ENCODE measurements at regions of chr6 and their contacts with region 1.

Region 1: DNA sequence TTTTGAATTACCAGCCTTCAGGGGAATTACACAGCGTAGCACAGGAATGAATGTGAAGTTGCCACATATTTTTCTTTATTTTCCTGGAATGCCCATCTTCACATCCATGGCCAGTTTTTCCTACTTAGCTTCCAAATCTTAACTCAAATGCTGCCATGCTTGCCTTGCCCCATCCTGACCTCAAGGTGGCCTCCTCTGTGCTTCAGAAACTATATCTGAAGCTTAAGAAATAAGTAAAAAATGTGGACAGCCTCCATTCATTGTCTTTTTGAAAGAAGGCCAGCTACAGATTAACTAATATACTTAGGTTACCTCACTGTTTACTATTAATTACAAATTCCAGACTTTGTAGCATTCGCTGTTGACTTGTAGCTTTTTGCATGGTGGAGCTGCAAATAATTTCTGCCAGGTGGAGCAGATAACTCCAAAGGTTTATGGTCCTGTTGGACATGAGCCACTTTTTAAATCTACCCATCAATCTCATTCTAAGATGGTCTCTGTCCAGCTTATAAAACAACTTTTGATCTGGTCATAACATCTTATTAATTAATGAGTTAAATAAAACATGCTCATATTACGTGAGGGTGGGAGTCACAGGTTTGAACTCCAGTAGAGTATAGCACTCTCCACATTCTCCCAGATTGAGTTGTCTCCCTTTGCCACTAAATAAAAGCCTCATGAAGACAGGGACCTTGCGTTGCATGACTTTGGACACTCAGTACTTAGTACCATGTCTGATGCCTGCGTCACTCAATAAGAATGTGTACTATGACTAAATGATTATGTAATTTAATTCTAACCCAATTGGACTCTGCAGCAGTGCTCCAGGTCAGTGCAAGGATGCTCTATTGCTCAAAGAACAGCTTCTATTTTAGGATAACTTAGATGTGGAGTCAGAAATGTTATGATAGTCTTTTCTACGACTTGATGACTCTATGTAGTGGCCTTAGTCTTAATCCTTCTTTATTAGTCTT is 678.6 kb upstream of the CITED2 start:
- DNase-seq: peak; percentile 26
- H3K4me3 ChIP-seq: no peak overlapping the region
- H3K27ac ChIP-seq: no peak overlapping the region
- H3K4me1 ChIP-seq: peaks cover 7% of the 10 kb centered on the region
- H3K27me3 ChIP-seq: no peaks in the 10 kb centered on the region
- CTCF ChIP-seq: peak; percentile 16 to 31
- POLR2A ChIP-seq: no peak

Region 2: GRCh38 chr6:139881728-139882211 is 171.3 kb before region 1 on chr6:
- CTCF ChIA-PET with region 1: interaction called, 9 read pairs
- POLR2A ChIA-PET with region 1: no interaction called
- dilution Hi-C with region 1: no loop called
- intact Hi-C with region 1: loop called (anchors 2 kb)
- DNase-seq: peak; percentile 69
- H3K4me3 ChIP-seq: no peak overlapping the region
- H3K27ac ChIP-seq: no peak overlapping the region
- H3K4me1 ChIP-seq: peaks cover 14% of the 10 kb centered on the region
- H3K27me3 ChIP-seq: no peaks in the 10 kb centered on the region
- CTCF ChIP-seq: peak; percentile 42 to 49
- POLR2A ChIP-seq: no peak

Region 3: DNA sequence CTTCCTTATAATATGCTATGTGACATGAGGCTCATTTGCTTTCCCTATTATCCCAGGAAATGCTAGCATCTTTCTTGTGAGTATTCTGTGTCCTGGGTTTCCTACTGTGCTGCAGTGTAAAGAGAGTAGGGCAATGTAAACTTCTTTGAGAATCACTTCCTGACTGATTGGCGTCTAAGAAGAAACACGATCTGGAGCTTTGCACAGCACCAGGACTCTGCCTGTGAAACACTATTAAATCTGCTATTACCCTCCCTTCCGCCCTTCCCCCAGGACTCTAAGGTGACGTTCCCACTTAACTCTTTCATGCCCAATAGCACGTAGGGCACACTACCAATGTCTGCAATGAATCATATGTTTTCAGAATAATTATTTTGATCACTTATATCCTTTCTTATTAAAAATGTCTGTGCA is 71.3 kb before region 1 on chr6:
- CTCF ChIA-PET with region 1: no interaction called
- POLR2A ChIA-PET with region 1: no interaction called
- dilution Hi-C with region 1: no loop called
- intact Hi-C with region 1: loop called (anchors 5 kb)
- DNase-seq: peak; percentile 82
- H3K4me3 ChIP-seq: no peak overlapping the region
- H3K27ac ChIP-seq: peak overlapping the region; percentile 13
- H3K4me1 ChIP-seq: peaks cover 15% of the 10 kb centered on the region
- H3K27me3 ChIP-seq: no peaks in the 10 kb centered on the region
- CTCF ChIP-seq: no peak
- POLR2A ChIP-seq: no peak

Region 4: GRCh38 chr6:139996253-139996834 is 56.7 kb before region 1 on chr6:
- CTCF ChIA-PET with region 1: no interaction called
- POLR2A ChIA-PET with region 1: no interaction called
- dilution Hi-C with region 1: no loop called
- intact Hi-C with region 1: no loop called
- DNase-seq: no peak
- H3K4me3 ChIP-seq: no peak overlapping the region
- H3K27ac ChIP-seq: no peak overlapping the region
- H3K4me1 ChIP-seq: no peaks in the 10 kb centered on the region
- H3K27me3 ChIP-seq: no peaks in the 10 kb centered on the region
- CTCF ChIP-seq: no peak
- POLR2A ChIP-seq: no peak

Measured in endothelial cell of umbilical vein (primary cell).